ENCODE measurements at regions of chr17 and their contacts with region 1.

Region 1: DNA sequence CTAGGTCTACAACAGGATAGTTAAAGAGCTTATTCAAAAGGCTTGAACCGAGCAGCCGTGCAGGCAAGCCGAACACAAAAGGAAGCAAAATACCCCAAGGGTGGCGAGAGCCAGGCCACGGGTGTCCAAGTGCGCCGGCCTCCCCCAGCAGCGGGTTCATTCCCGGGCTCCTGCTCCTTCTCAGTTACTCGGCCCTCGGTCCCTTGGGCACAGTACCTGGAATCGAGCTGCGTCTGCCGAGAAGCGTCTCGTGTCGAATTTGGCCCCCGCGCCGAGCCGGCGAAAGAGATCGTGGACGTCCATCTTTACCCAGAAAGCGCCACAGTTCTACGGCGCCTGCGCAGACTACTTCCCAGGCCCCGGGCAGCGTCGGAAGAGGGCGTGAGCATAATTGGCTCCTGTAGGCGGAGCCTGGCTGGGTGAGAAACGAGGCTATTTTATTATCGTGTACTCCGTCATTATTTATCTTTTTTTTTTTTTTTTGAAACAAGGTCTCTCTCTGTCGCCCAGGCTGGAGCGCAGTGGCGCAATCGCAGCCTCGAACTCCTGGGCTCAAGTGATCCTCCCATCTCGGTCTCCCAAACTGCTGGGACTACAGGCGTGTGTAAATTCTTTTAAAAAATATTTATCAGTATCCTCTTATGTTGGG is at the start of gene DDX52:
- DNase-seq: peak; percentile 96 to 98 (median 96)
- ATAC-seq: peak; percentile 99
- H3K4me3 ChIP-seq: peak within 1 kb of the TSS; percentile 83
- H3K27ac ChIP-seq: peak within 1 kb of the TSS; percentile 90
- H3K4me1 ChIP-seq: no peaks in the 10 kb centered on the region
- H3K27me3 ChIP-seq: no peaks in the 10 kb centered on the region
- total RNA-seq, gene DDX52: 14.3 to 16.5 (median 15.5) TPM

Region 2: GRCh38 chr17:37516127-37516571 is 127.1 kb before region 1 on chr17:
- intact Hi-C with region 1: no loop called
- DNase-seq: no peak
- ATAC-seq: no peak
- H3K4me3 ChIP-seq: no peak overlapping the region
- H3K27ac ChIP-seq: no peak overlapping the region
- H3K4me1 ChIP-seq: no peaks in the 10 kb centered on the region
- H3K27me3 ChIP-seq: no peaks in the 10 kb centered on the region

Region 3: DNA sequence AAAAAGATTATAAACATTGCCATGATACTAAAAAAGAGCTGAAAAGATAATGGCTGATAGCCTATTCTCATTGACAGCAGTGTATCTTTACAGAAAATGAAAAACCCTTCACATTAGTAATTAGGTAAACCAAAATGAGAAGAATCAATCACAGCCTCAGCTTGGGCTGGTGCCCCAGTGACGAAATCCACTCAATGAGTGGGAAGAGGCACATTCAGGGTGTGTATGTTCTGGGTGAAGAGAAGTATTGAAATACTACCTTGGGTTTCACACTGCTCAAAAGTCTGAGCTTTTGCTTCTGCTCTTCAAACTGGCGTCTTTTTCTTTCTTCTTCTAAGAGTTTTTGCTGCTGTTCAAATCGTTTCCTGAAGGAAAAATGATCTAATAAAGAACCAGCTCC is 58.2 kb before region 1 on chr17:
- intact Hi-C with region 1: no loop called
- DNase-seq: no peak
- ATAC-seq: no peak
- H3K4me3 ChIP-seq: no peak overlapping the region
- H3K27ac ChIP-seq: no peak overlapping the region
- H3K4me1 ChIP-seq: no peaks in the 10 kb centered on the region
- H3K27me3 ChIP-seq: no peaks in the 10 kb centered on the region

Region 4: GRCh38 chr17:37818689-37819088 is 175.4 kb after region 1 on chr17:
- intact Hi-C with region 1: loop called in 2 of 4 experiments (anchors 5 to 10 kb)
- DNase-seq: no peak
- ATAC-seq: no peak
- H3K4me3 ChIP-seq: no peak overlapping the region
- H3K27ac ChIP-seq: no peak overlapping the region
- H3K4me1 ChIP-seq: no peaks in the 10 kb centered on the region
- H3K27me3 ChIP-seq: no peaks in the 10 kb centered on the region